Activated CD8-positive, alpha-beta T cell treated with anti-CD3 and anti-CD28 coated beads, Interleukin-2, amount 10 ng/mL, durations not matched to agents 7 days and 5 days (primary cell): ENCODE measurements at regions of chr2 and their contacts with region 1.

Region 1: GRCh38 chr2:86440631-86441391 is at the start of gene KDM3A:
- DNase-seq: peak; percentile 100
- ATAC-seq: peak; percentile 88
- H3K4me3 Mint-ChIP-seq: peak within 1 kb of the TSS; percentile 96
- H3K27ac Mint-ChIP-seq: peak within 1 kb of the TSS; percentile 99
- H3K4me1 Mint-ChIP-seq: peaks cover 42% of the 10 kb centered on the region
- H3K27me3 Mint-ChIP-seq: no peaks in the 10 kb centered on the region
- total RNA-seq, gene KDM3A: 74.9 to 80.1 TPM

Region 2: DNA sequence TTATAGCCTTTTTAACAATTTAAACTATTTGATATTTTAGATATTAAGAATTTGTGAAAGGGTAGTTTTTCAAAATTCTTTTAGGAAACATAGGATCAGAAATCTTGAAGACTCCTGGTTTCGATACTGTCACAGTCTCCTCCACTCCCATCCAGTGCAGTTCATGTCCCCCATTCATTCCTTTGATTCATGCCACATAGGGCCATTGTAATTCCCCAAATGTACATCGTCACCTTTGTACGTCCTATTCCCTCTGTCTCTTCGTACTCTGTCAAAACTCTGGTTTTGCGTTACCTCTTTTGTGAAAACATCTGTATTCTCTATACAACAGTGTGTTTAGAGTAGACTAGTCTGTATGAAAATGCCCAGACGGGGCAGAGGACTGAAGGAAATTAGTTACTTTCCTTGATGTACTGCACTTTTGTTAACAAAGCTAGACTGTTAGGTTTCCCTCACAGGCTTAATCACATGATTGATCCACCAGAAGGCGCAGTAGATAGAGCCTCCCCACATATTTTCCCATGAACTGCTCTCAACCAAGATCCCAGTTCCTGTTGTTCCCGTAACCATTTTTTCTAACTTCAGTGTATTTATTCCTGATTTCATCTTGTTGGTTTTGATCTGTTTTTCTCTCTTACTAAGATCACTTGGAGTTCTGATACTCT is 239.0 kb before region 1 on chr2:
- CTCF ChIA-PET with region 1: no interaction called
- POLR2A ChIA-PET with region 1: interaction called, 12 read pairs
- DNase-seq: no peak
- ATAC-seq: no peak
- H3K4me3 Mint-ChIP-seq: no peak overlapping the region
- H3K27ac Mint-ChIP-seq: no peak overlapping the region
- H3K4me1 Mint-ChIP-seq: peaks cover 37% of the 10 kb centered on the region
- H3K27me3 Mint-ChIP-seq: no peaks in the 10 kb centered on the region

Region 3: DNA sequence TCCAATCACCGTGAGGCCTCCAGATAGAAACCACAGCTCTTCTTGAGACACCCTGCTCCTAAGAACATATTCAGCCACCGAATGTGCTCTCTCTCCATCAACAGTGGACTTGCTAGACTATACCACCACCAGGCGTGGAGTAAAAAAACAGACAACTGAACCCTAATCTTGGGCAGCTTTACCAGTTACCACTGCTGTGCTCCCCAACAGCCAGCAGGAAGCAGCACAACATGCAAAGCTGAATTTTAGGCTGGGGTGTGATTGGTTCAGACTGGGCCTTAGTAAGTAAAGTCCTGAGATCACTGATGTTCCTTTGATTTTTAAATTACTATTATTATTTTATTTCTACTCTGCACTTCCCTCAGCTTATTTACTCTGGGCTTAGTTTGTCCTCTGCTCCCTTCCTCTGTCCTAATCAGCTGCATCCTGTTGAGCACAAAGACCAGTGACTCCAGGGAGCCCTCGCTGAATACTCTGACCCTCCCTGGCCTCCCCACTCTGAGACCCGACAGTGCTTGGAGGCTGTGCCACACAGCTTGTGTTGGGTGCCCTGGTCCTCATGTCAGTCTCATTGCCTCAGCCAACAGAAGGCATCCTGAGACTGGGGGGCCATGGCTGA is 219.6 kb before region 1 on chr2:
- CTCF ChIA-PET with region 1: interaction called, 10 read pairs
- POLR2A ChIA-PET with region 1: interaction called, 11 read pairs
- DNase-seq: peak; percentile 77
- ATAC-seq: peak; percentile 68
- H3K4me3 Mint-ChIP-seq: no peak overlapping the region
- H3K27ac Mint-ChIP-seq: peak overlapping the region; percentile 39
- H3K4me1 Mint-ChIP-seq: peaks cover 46% of the 10 kb centered on the region
- H3K27me3 Mint-ChIP-seq: no peaks in the 10 kb centered on the region

Region 4: DNA sequence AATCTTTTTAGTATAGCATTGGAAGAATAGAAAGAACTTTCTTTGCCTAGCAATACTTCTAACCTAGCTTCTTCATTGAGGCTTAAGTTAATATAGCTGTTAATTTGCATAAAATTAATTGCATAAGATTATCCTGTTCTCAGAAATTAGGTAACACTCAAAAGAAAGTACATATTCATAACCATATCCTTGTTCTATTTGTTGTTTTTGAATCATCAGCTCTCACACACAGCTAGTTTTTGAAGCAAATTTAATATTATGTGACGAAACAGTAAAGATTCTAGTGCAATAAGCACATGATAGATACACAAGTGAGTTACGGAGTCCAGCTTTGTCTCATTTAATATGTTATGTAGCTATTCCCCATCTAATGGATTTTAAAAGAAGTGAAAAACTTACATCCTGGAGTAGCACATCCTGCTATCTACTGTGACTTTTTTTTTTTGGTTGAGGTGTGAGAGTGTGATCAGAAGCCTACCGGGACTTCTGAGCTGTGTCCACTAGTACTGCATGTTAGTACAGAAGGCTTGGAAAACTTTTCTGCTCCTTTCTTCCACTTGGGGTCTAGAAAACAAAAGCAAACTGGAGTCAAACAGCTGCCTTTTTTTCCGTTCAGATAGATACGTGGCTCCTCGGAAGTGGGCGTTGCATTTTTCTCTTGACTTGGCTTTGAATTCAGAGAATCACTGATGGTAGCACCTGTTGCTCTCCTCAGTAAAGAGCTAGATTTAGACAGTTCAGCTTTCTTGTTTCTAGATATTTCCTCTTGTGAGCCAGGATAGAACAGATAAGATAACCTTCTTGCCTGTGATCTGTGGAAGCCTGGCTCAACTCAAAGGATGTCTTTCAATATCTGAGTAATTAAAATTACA is 27.6 kb after region 1 on chr2:
- CTCF ChIA-PET with region 1: interaction called, 17 read pairs
- POLR2A ChIA-PET with region 1: interaction called, 7 read pairs
- DNase-seq: peak; percentile 37
- ATAC-seq: peak; percentile 78
- H3K4me3 Mint-ChIP-seq: peak overlapping the region; percentile 48
- H3K27ac Mint-ChIP-seq: peak overlapping the region; percentile 73
- H3K4me1 Mint-ChIP-seq: peaks cover 33% of the 10 kb centered on the region
- H3K27me3 Mint-ChIP-seq: no peaks in the 10 kb centered on the region

Region 5: GRCh38 chr2:86541334-86541733 is 100.5 kb after region 1 on chr2:
- CTCF ChIA-PET with region 1: no interaction called
- POLR2A ChIA-PET with region 1: no interaction called
- DNase-seq: no peak
- ATAC-seq: no peak
- H3K4me3 Mint-ChIP-seq: no peak overlapping the region
- H3K27ac Mint-ChIP-seq: no peak overlapping the region
- H3K4me1 Mint-ChIP-seq: no peaks in the 10 kb centered on the region
- H3K27me3 Mint-ChIP-seq: no peaks in the 10 kb centered on the region

Region 6: GRCh38 chr2:86552889-86553288 is 112.1 kb after region 1 on chr2:
- CTCF ChIA-PET with region 1: no interaction called
- POLR2A ChIA-PET with region 1: interaction called, 13 read pairs
- DNase-seq: peak; percentile 44
- ATAC-seq: peak; percentile 70
- H3K4me3 Mint-ChIP-seq: peak overlapping the region; percentile 49
- H3K27ac Mint-ChIP-seq: peak overlapping the region; percentile 78
- H3K4me1 Mint-ChIP-seq: peaks cover 18% of the 10 kb centered on the region
- H3K27me3 Mint-ChIP-seq: no peaks in the 10 kb centered on the region

Region 7: DNA sequence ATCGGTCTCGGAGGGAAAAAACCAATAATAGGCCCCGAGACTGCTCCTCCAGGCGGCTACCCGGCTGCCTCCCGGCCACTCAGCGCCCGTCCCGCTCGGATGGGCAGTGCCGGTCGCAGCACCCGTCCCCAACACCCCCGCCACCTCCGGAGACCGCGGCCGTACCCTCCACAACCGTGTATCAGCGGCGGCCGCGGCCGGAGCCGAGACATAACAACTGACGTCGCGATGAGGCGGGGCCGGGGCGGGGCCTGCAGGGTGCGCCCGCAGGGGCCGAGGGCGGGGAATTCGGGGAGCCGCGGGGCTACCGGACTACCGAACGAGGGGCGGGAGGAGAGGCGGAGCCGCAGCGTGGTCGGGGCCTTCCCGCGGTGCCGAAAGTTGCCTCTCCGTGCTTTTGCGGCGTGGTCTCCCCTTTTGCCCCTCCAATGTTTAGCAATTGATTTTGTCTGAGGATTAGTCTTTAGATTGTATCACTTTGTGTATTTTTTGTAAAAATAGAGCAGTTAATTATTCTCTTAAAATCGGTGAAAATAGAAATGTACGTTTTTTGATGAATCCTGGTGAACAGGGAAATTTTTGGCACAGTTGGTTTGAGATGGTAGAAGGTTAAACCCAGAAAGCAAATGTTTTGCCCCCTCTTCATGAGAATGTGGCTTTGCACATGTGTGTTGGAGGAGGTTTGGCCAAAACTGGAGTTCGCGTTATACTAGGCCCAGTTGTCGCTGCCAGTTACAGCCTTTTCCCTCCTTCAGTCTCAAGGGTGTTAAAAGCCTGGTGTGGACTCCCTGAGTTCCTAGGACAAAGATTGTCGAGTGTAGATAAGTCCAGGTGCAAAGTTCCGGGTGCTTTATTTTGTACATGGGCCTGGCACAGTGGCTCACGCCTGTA is 183.1 kb after region 1 on chr2 and contains the start of gene RNF103:
- CTCF ChIA-PET with region 1: interaction called, 3 read pairs
- POLR2A ChIA-PET with region 1: interaction called, 24 read pairs
- DNase-seq: peak; percentile 92
- ATAC-seq: peak; percentile 85
- H3K4me3 Mint-ChIP-seq: peak within 1 kb of the TSS; percentile 92
- H3K27ac Mint-ChIP-seq: peak within 1 kb of the TSS; percentile 96
- H3K4me1 Mint-ChIP-seq: peaks cover 21% of the 10 kb centered on the region
- H3K27me3 Mint-ChIP-seq: peaks cover 4% of the 10 kb centered on the region
- total RNA-seq, gene RNF103: 8.7 to 9.9 TPM

Region 8: GRCh38 chr2:86808315-86809161 is 367.7 kb after region 1 on chr2:
- CTCF ChIA-PET with region 1: no interaction called
- POLR2A ChIA-PET with region 1: interaction called, 13 read pairs
- DNase-seq: peak; percentile 98
- ATAC-seq: peak; percentile 73
- H3K4me3 Mint-ChIP-seq: peak overlapping the region; percentile 93
- H3K27ac Mint-ChIP-seq: peak overlapping the region; percentile 94
- H3K4me1 Mint-ChIP-seq: peaks cover 50% of the 10 kb centered on the region
- H3K27me3 Mint-ChIP-seq: no peaks in the 10 kb centered on the region